PC-3 (cell line): ENCODE measurements at regions of chr17 and their contacts with region 1.

Region 1: DNA sequence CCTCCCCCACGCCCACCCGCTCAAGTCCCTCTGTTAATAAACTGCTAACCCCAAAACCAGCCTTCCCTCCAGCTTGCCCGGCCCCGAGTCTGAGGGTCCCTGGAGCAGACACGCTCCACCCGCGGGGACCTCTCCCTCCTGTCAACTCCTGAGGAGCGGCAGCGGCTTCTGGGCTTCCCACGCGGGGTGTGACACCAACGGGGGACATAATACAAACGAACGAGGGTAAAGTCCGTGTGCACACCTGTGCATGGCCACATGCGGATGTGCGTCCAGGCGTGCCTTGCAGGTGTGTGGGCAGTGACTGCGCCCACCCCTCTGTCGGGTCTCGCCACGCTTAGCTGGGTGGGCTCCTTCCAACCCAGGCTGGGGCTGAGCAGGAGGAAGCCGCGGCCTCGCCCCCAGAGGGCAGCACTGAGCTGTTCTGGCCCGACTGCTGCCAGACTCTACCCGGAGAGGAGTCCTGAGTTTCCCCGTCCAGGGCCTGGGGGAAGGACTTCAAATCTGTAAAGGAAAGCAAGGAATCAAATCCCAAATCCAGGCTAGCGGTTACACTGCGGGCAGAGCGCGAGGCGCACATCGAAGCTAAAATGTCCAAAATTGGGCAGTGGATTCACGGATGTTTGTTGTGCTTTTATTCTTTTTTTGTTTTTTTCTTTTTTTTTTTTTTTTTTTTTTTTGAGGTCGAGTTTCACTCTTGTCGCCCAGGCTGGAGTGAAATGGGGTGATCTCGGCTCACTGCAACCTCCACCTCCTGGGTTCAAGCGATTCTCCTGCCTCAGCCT is 24.2 kb upstream of the KRT17 start:
- DNase-seq: peak; percentile 78
- ATAC-seq: peak; percentile 86
- H3K4me3 ChIP-seq: peak overlapping the region; percentile 72
- H3K27ac ChIP-seq: peak overlapping the region; percentile 65
- H3K4me1 ChIP-seq: peaks cover 11% of the 10 kb centered on the region
- H3K27me3 ChIP-seq: no peaks in the 10 kb centered on the region
- CTCF ChIP-seq: peak; percentile 81

Region 2: DNA sequence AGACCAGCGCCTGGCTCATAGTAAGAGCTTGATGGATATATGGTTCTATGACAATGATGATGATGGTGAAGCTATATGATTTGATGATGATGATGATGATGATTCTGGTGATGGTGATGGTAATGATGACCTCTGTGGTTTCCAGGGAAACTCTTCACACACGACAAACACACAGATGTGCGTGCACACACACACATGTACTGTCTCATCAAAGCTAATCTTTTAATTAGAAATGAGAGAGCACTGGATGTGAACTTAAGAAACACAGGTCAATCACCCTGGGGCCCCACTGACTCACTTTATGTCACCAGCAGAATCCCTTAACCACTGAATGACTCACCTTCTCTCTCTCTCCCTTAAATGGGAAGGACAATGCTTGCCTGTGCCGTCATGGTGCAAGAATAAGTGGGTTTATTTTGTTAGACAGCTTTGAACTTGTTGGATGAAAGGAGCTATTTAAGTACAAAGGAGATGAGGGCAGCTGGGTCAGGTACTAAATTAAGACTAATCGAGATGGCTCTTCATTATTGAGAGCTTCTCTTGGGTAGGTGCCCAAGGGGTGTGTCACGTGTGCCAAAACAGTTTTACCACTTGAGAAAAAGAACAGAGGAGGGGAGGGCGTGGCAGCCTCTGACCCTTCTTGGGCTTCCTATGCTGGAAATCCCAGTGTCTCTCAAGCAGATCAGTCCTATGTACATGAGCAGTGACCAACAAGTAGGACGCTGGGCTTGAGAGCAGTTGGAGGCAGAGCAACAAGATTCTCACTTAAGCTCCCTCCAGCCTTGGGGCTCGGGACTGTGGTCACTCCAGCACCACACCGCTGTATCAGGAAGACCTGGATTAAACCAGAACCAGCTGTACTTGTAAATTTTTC is 244.6 kb before region 1 on chr17:
- CTCF ChIA-PET with region 1: interaction called, 3 read pairs
- POLR2A ChIA-PET with region 1: no interaction called
- intact Hi-C with region 1: loop called (anchors 10 kb)
- DNase-seq: peak; percentile 92
- ATAC-seq: peak; percentile 84
- H3K4me3 ChIP-seq: no peak overlapping the region
- H3K27ac ChIP-seq: peak overlapping the region; percentile 97
- H3K4me1 ChIP-seq: peaks cover 42% of the 10 kb centered on the region
- H3K27me3 ChIP-seq: no peaks in the 10 kb centered on the region
- CTCF ChIP-seq: no peak

Region 3: GRCh38 chr17:41521574-41522261 is 126.9 kb before region 1 on chr17:
- CTCF ChIA-PET with region 1: interaction called, 10 read pairs
- POLR2A ChIA-PET with region 1: no interaction called
- intact Hi-C with region 1: no loop called
- DNase-seq: peak; percentile 95
- ATAC-seq: peak; percentile 60
- H3K4me3 ChIP-seq: peak overlapping the region; percentile 42; the same call in 1 of the 2 replicates
- H3K27ac ChIP-seq: peak overlapping the region; percentile 97
- H3K4me1 ChIP-seq: peaks cover 76% of the 10 kb centered on the region
- H3K27me3 ChIP-seq: no peaks in the 10 kb centered on the region
- CTCF ChIP-seq: no peak

Region 4: DNA sequence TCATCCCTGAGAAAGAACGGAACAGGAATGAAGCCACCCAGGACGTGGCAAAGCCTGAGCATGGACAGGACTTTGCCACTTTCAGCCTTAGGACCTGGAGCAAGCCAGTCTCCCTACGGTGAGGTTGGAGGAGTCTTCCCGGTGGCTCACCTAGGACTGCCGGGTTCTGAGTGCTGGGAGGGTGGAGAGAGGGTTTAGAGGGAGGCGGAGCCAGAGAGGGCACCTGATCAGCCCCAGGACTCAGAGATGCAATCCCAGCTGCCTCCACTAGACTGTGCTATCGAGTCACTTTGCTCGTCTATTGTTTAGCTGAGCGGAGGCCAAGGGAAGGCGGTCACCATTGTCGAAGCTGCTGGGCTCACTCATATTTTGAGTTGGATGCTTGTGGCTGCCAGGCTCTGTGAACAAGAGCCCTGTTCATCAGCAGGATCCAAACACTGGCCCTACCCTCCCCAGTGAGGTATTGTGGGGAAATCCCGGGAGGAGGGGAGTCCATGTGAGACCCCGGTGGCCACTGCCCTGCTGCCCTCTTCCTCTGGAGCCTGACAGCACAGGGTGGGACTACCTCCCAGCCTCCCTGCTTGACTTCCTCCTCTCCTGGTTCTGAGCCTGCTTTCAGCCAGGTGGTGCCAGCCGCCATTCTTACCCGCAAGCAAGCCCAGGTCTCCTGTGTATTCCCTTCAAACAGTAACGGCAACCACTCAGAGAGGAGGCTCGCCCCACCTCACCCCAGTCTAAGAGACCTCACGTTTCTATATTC is 68.9 kb before region 1 on chr17:
- CTCF ChIA-PET with region 1: interaction called, 4 read pairs
- POLR2A ChIA-PET with region 1: interaction called, 15 read pairs
- intact Hi-C with region 1: loop called (anchors 2 kb)
- DNase-seq: peak; percentile 87
- ATAC-seq: peak; percentile 81
- H3K4me3 ChIP-seq: no peak overlapping the region
- H3K27ac ChIP-seq: peak overlapping the region; percentile 6; the same call in 1 of the 2 replicates
- H3K4me1 ChIP-seq: peaks cover 29% of the 10 kb centered on the region
- H3K27me3 ChIP-seq: no peaks in the 10 kb centered on the region
- CTCF ChIP-seq: peak; percentile 65

Region 5: DNA sequence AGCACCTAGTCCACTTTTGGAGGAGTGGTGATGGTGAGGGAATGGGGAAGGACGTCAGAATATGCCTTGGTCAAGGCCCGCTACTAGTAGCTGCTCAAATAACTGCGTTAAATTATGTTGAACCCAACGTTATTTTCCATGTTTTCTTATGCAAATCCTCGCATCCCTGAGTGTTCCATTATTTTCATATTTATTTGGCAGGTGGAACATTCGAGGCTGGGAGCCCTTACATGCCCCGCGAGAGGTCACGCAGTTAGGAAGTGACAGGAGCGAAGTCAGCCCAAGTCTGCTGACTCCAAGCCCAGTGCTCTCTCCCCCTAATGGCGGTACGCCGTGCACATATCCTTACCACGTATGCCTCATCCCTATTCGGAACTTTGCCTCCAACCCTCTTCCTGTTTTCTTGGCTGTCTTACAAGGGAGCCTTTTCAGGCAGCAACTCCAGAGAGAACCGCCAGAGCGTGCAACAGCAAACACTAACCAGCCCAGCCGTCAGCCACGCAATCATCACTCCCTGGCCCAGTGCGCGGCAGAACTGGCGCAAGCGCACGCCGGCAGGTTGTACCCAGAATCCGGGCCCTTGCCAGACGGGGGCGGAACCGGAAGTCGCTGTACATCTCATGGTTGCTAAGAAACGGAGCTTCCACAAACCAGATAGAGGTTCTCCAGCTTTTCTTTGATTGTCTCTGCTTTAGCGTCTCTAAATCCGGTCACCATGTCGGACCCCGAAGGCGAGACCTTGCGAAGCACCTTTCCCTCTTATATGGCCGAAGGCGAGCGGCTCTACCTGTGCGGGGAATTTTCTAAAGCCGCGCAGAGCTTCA is 281.6 kb after region 1 on chr17 and contains the start of gene ODAD4:
- CTCF ChIA-PET with region 1: interaction called, 13 read pairs
- POLR2A ChIA-PET with region 1: no interaction called
- intact Hi-C with region 1: no loop called
- DNase-seq: peak; percentile 92
- ATAC-seq: peak; percentile 98
- H3K4me3 ChIP-seq: peak within 1 kb of the TSS; percentile 65
- H3K27ac ChIP-seq: peak within 1 kb of the TSS; percentile 62
- H3K4me1 ChIP-seq: 0 out of 2 replicates have a peak, but pooled peaks cover 6% of the 10 kb centered on the region
- H3K27me3 ChIP-seq: no peaks in the 10 kb centered on the region
- CTCF ChIP-seq: peak; percentile 47
- total RNA-seq, gene ODAD4: 0.15 and 0.98 TPM in 2 replicates